HCT116 (cell line): ENCODE measurements at regions of chr16 and their contacts with region 1.

Region 1: DNA sequence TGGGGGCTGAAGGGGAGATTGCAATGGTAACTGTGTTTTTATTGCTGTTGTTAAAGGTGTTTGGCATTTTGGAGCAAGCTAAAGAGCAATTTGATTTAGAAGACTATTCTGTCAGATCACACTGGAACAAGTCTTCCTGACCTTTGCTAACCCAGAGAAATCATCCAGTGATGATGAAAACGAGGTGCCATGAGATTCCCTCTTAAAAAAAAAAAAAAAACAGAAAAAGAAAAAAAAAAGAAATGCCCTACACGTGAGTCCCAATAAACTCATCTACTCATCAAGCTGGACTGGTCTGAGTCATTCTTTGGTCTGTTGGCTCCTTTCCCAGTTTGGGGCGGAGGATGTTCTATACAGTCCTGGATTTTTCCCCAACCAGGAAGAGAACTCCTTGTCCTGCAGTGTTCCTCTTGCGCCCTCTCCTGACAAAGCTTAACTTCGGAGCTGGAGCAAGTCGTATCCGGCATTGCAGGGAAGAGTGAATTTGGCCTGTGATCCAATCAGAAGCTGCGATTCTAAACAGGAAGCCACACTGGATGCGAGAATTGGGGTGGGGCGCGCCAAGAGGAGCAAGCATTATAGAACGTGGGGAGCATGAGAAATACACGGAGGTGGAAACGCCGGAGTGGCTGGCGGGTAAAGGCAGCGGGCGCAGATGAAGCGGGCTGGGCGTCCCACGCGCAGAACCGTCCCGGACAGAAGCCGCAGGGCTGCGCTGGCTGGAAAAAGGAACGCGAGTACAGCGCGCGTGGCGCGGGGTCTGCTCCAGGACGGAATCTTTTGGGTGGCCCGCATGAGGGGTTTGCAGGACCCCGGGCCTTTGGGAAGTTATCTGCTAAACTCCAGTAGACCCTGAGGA is 22.4 kb upstream of the CRYM start:
- DNase-seq: peak; percentile 100
- ATAC-seq: peak; percentile 81
- H3K4me3 ChIP-seq: peak overlapping the region; percentile 63 to 74
- H3K27ac ChIP-seq: peak overlapping the region; percentile 85
- H3K4me1 ChIP-seq: peaks cover 12 to 34% of the 10 kb centered on the region in 2 experiments
- H3K27me3 ChIP-seq: no peaks in the 10 kb centered on the region
- CTCF ChIP-seq: peak; percentile 91 to 97 (median 95)
- POLR2A ChIP-seq: peak; percentile 38
- RAD21 ChIP-seq: peak; percentile 99

Region 2: GRCh38 chr16:20833086-20833485 is 467.5 kb before region 1 on chr16:
- CTCF ChIA-PET with region 1: no interaction called
- POLR2A ChIA-PET with region 1: no interaction called
- RAD21 ChIA-PET with region 1: no interaction called
- intact Hi-C with region 1: no loop called
- DNase-seq: no peak
- ATAC-seq: no peak
- H3K4me3 ChIP-seq: no peak overlapping the region
- H3K27ac ChIP-seq: no peak overlapping the region
- H3K4me1 ChIP-seq: no peaks in the 10 kb centered on the region
- H3K27me3 ChIP-seq: no peaks in the 10 kb centered on the region
- CTCF ChIP-seq: no peak
- POLR2A ChIP-seq: no peak
- RAD21 ChIP-seq: no peak

Region 3: DNA sequence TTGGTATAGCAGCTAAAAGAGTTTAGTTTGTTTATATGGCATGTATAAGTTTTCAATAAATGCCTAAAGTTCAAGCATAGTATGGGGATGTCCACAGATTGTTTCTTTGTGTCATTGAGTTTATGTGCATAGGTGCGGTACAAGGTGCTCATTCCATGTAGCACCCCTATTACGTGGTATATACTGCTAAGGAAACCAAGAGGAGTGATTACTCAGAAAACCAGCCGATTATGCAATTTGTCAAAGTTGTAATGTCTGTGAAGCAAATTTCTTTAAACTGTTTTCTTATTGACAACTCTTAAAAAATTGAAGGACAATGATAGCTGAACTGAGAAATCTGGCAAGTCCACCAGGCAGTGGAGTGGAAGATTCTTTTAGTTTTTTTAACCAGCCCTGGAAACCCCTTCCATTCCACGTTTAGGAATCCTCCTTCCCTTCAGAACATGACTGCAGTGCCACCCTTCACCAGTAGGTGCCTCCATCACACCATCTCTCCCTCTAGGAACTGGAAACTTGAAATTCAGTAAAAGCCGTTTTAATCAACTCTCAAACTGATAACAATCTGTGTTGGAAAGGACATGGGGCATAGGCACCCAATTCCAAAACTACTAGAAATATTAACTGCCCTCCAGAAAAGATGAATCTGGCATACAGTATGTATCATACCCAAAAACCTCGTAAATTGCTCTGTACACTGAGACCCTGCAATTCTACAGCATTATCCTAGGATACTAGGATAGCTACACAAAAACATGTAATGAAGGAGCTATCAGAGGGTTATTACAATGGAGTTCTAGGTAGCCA is 450.7 kb before region 1 on chr16:
- CTCF ChIA-PET with region 1: interaction called, 8 read pairs
- POLR2A ChIA-PET with region 1: interaction called, 3 read pairs
- RAD21 ChIA-PET with region 1: no interaction called
- intact Hi-C with region 1: loop called (anchors 1 kb)
- DNase-seq: peak; percentile 40
- ATAC-seq: peak; percentile 68
- H3K4me3 ChIP-seq: no peak overlapping the region
- H3K27ac ChIP-seq: no peak overlapping the region
- H3K4me1 ChIP-seq: peaks cover 19 to 22% of the 10 kb centered on the region in 2 experiments
- H3K27me3 ChIP-seq: no peaks in the 10 kb centered on the region
- CTCF ChIP-seq: peak; percentile 89 to 99 (median 97); a peak in 5 of 6 replicates
- POLR2A ChIP-seq: no peak
- RAD21 ChIP-seq: peak; percentile 98

Region 4: GRCh38 chr16:21158208-21159110 is 142.1 kb before region 1 on chr16 and contains the start of gene LDAF1:
- CTCF ChIA-PET with region 1: interaction called, 60 read pairs
- POLR2A ChIA-PET with region 1: interaction called, 7 read pairs
- RAD21 ChIA-PET with region 1: interaction called, 7 to 10 read pairs
- intact Hi-C with region 1: loop called (anchors 1 kb)
- DNase-seq: peak; percentile 41
- ATAC-seq: peak; percentile 93
- H3K4me3 ChIP-seq: peak within 1 kb of the TSS; percentile 62 to 74
- H3K27ac ChIP-seq: peak within 1 kb of the TSS; percentile 51
- H3K4me1 ChIP-seq: peaks cover 15 to 27% of the 10 kb centered on the region in 2 experiments
- H3K27me3 ChIP-seq: no peaks in the 10 kb centered on the region
- CTCF ChIP-seq: no peak
- POLR2A ChIP-seq: no peak
- RAD21 ChIP-seq: no peak; the same call in none of the 2 replicates
- total RNA-seq, gene LDAF1: 30.0 TPM

Region 5: DNA sequence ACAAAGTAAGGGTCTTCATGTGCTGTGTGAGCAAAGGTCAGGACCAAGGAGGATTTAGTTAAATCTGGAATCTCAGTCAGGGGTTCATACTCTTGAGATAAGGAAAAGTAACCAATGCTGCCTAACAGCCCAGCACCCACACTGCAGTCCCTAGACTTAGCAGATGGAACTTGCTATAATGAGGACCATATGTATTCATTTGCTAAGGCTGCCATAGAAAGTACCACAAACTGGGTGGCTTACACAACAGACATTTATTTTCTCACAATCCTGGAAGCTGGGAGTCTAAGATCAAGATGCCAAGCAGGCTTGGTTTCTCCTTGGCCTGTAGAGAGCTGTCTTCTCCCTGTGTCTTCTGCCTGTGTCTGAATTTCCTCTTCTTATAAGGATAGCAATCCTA is 109.9 kb before region 1 on chr16:
- CTCF ChIA-PET with region 1: interaction called, 101 read pairs
- POLR2A ChIA-PET with region 1: interaction called, 18 read pairs
- RAD21 ChIA-PET with region 1: interaction called, 9 to 11 read pairs
- intact Hi-C with region 1: loop called (anchors 1 kb)
- DNase-seq: no peak
- ATAC-seq: no peak
- H3K4me3 ChIP-seq: no peak overlapping the region
- H3K27ac ChIP-seq: no peak overlapping the region
- H3K4me1 ChIP-seq: peaks cover 8 to 17% of the 10 kb centered on the region in 2 experiments; a peak in 3 of 4 replicates
- H3K27me3 ChIP-seq: no peaks in the 10 kb centered on the region
- CTCF ChIP-seq: no peak
- POLR2A ChIP-seq: no peak
- RAD21 ChIP-seq: no peak

Region 6: GRCh38 chr16:22321339-22322001 is 1020.9 kb after region 1 on chr16:
- CTCF ChIA-PET with region 1: interaction called, 7 read pairs
- POLR2A ChIA-PET with region 1: no interaction called
- RAD21 ChIA-PET with region 1: no interaction called
- intact Hi-C with region 1: loop called (anchors 10 kb)
- DNase-seq: peak; percentile 24
- ATAC-seq: peak; percentile 83
- H3K4me3 ChIP-seq: no peak overlapping the region
- H3K27ac ChIP-seq: no peak overlapping the region
- H3K4me1 ChIP-seq: no peaks in the 10 kb centered on the region
- H3K27me3 ChIP-seq: no peaks in the 10 kb centered on the region
- CTCF ChIP-seq: peak; percentile 83 to 98 (median 89)
- POLR2A ChIP-seq: no peak
- RAD21 ChIP-seq: peak; percentile 93